ENCODE measurements at regions of chr16 and their contacts with region 1.

Region 1: GRCh38 chr16:84144859-84145639 is at the starts of genes DNAAF1 and HSDL1:
- DNase-seq: peak; percentile 88
- H3K4me3 ChIP-seq: peak within 1 kb of the TSS; percentile 65 to 91 (median 85)
- H3K27ac ChIP-seq: peak within 1 kb of the TSS; percentile 34
- H3K4me1 ChIP-seq: peaks cover 5% of the 10 kb centered on the region
- H3K27me3 ChIP-seq: peaks cover 0 to 4% of the 10 kb centered on the region in 2 experiments
- CTCF ChIP-seq: no peak
- POLR2A ChIP-seq: no peak
- total RNA-seq, gene DNAAF1: not detected in 2 replicates
- total RNA-seq, gene HSDL1: 26.1 and 27.9 TPM in 2 replicates

Region 2: GRCh38 chr16:84116720-84117493 is 28.1 kb before region 1 on chr16 and contains the start of gene MBTPS1:
- CTCF ChIA-PET with region 1: interaction called, 5 read pairs
- POLR2A ChIA-PET with region 1: interaction called, 4 read pairs
- dilution Hi-C with region 1: no loop called
- intact Hi-C with region 1: loop called (anchors 2 kb)
- DNase-seq: peak; percentile 98
- H3K4me3 ChIP-seq: peak within 1 kb of the TSS; percentile 70 to 96 (median 88)
- H3K27ac ChIP-seq: peak within 1 kb of the TSS; percentile 69
- H3K4me1 ChIP-seq: peaks cover 10% of the 10 kb centered on the region
- H3K27me3 ChIP-seq: no peaks in the 10 kb centered on the region
- CTCF ChIP-seq: no peak
- POLR2A ChIP-seq: peak; percentile 69
- total RNA-seq, gene MBTPS1: 93.0 and 99.6 TPM in 2 replicates